Aorta (tissue), 5 donors: ENCODE measurements at regions of chr17 and their contacts with region 1.

Region 1: DNA sequence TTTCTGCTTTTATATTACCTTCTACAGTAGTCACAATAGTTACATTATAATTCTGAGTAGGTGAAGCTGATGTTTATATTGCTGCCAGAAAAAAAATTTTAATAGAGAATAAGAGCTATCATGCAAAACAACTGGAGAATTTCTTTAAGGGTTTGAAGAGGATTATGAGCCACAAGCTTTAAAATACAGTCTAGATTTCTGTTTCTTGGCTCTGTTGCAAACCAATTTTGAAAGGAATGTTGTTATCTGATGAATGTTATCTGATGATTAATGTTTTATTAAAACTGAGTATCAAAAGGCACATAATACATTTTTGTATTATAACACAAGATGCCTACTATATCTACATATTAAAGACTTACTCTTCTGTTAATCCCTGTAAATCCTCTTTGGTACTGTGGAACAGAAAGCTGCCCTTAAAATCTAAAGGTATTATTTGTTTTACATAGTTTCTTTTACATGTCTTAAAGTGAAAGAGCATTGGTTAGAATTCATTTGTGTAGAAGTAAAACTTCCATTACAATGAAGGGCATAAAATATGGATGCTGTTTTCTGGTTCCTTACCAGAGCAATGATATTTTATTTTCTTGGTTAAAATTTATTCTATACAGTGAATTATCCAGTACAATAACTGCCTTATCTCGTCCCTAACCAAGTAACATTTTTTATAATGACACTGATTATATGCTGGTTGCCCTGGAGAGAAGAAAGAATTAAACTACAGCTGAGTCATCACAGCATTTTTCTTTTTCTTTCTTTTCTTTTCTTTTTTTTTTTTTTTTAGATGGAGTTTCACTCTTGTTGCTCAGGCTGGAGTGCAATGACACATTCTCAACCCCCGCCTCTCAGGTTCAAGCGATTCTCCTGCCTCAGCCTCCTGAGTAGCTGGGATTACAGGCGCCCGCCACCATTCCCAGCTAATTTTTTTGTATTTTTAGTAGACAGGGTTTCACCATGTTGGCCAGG is 205.7 kb downstream of the TANC2 start:
- DNase-seq: peak in 1 of 2 donors; percentile 50
- ATAC-seq: no peak
- H3K4me3 ChIP-seq: no peak overlapping the region
- H3K27ac ChIP-seq: no peak overlapping the region
- H3K4me1 ChIP-seq: peaks cover 0 to 4% of the 10 kb centered on the region in 2 donors
- H3K27me3 ChIP-seq: no peaks in the 10 kb centered on the region

Region 2: DNA sequence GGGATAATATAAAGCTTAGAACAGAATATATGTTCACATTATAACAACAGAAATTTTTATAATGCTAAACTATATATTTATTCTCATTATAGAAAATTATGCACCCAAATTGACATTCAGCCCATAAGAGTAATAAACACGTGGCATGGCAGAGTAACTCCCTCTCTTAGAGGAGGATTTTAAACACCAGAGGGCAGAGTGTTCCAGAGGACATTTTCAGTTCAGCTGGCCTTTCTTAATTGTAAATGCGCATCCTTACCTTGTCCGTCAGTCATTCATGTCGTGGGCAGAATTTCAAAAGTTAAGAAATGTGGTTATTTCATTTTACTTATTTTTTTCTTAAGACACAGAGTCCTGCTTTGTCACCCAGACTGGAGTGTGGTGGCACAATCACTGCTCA is 58.5 kb before region 1 on chr17:
- intact Hi-C with region 1: no loop called
- DNase-seq: no peak
- ATAC-seq: no peak
- H3K4me3 ChIP-seq: no peak overlapping the region
- H3K27ac ChIP-seq: no peak overlapping the region
- H3K4me1 ChIP-seq: no peaks in the 10 kb centered on the region
- H3K27me3 ChIP-seq: no peaks in the 10 kb centered on the region

Region 3: DNA sequence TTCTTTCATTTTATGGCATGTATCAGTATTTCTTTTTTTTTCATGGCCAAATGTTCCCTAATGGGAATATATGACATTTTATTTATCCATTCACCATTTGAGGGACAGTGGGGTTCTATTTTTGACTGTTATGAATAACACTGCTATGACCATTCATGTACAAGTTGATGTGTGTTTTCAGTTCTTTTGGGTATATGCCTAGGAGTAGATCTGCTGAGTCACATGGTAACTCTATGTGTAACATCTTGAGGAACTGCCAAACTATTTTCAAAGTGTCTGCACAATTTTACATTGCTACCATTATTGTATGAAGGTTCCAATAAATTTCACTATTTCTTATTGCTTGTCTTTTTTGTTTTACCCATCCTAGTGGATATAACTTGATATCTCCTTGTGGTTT is 17.4 kb after region 1 on chr17:
- intact Hi-C with region 1: no loop called
- DNase-seq: no peak
- ATAC-seq: peak; percentile 38
- H3K4me3 ChIP-seq: no peak overlapping the region
- H3K27ac ChIP-seq: no peak overlapping the region
- H3K4me1 ChIP-seq: no peaks in the 10 kb centered on the region
- H3K27me3 ChIP-seq: no peaks in the 10 kb centered on the region

Region 4: DNA sequence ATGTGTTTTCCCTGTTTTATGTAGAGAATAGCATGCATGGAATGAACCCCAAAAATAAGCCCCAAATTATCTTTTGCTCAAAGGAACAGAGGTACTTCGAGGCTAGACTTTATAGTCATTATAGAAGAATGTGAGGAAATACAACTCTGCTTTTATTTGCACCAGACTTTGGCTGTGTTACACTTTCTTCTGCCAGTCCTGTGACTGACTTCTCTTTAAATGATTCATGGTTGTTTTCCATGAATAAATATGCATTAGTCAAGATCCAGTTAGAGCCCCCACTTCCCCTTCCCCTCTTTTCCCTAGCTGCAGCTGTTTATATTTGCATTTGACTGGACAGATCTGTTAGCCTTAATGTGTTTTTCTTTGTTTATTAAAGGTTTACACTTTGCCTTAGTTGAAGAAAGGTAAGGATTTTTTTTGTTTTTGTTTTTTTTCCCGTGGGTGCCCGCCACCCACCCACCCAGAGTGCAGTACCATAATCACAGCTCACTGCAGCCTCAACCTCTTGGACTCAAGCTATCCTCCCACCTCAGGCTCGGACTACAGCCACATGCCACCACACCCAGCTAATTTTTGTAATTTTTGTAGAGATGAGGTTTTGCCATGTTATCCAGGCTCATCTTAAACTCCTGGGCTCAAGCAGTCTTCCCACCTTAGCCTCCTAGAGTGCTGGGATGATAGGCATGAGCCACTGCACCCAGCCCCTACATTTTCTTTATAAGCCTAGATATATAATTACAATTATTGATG is 121.8 kb after region 1 on chr17:
- intact Hi-C with region 1: no loop called
- DNase-seq: no peak
- ATAC-seq: peak; percentile 55
- H3K4me3 ChIP-seq: no peak overlapping the region
- H3K27ac ChIP-seq: peak overlapping the region; percentile 89 to 92
- H3K4me1 ChIP-seq: peaks cover 3 to 8% of the 10 kb centered on the region in 2 donors
- H3K27me3 ChIP-seq: no peaks in the 10 kb centered on the region

Region 5: GRCh38 chr17:63399856-63400255 is 228.1 kb after region 1 on chr17:
- intact Hi-C with region 1: loop called in 1 of 2 experiments (anchors 10 kb)
- DNase-seq: peak; percentile 49 to 70
- ATAC-seq: peak; percentile 57
- H3K4me3 ChIP-seq: no peak overlapping the region
- H3K27ac ChIP-seq: peak overlapping the region in 1 of 2 donors; percentile 14
- H3K4me1 ChIP-seq: peaks cover 0 to 9% of the 10 kb centered on the region in 2 donors
- H3K27me3 ChIP-seq: no peaks in the 10 kb centered on the region